Right cardiac atrium (tissue), 5 donors: ENCODE measurements at regions of chr17 and their contacts with region 1.

Region 1: DNA sequence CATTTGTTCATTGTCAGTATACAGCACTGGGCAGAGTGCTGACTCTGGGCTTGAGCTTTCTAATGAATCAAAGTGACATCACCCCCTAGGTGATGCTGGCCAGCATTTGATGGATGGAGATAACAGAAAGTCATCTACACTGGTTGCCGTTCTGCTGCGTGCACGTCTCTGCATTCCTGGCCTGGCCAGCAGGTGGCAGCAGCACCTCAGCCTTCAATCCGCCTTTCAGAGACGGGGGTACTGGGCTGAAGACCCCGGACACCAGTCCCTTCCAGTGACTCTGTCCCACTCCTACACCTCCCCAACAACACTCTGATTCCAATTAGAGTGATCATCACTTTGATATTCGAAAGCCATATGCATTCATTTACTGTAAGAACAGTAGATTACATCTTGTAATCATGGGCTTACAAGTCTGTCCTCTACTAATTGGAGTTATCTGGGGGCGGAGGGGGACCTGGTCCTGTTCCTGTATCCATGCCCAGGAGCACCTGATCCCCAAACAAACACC is 6.0 kb downstream of the CPSF4L start:
- DNase-seq: peak; percentile 40 to 74 (median 72)
- ATAC-seq: peak; percentile 66 to 76
- H3K4me3 ChIP-seq: no peak overlapping the region
- H3K27ac ChIP-seq: no peak overlapping the region
- H3K4me1 ChIP-seq: no peaks in the 10 kb centered on the region
- H3K27me3 ChIP-seq: no peaks in the 10 kb centered on the region

Region 2: GRCh38 chr17:73205459-73205961 is 50.2 kb before region 1 on chr17:
- intact Hi-C with region 1: no loop called
- DNase-seq: no peak
- ATAC-seq: no peak
- H3K4me3 ChIP-seq: no peak overlapping the region
- H3K27ac ChIP-seq: no peak overlapping the region
- H3K4me1 ChIP-seq: peaks cover 14% of the 10 kb centered on the region
- H3K27me3 ChIP-seq: no peaks in the 10 kb centered on the region

Region 3: DNA sequence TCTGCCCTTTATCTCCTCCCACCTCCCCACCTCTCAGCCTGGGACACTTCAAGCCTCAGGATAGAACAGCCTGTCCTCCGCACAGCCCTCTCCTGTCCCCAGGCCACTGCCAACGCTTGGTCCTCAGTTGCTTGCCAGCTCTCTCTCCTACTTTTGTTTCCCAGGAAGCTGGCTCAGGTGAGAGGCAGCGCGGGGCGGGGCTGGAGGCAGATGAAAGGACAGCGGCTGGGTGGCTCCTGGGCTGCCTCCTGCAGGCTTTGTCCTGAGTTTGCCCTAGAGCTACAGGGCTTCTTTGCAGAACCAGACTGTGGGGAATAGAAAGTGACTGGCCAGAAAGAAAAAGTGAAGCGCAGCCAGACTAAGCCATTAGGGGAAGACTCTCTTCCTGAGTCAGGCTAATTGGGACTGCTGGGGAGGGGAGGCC is 104.3 kb after region 1 on chr17:
- intact Hi-C with region 1: no loop called
- DNase-seq: peak in 2 of 3 donors; percentile 53 to 65
- ATAC-seq: peak; percentile 20 to 51
- H3K4me3 ChIP-seq: no peak overlapping the region
- H3K27ac ChIP-seq: no peak overlapping the region
- H3K4me1 ChIP-seq: peaks cover 7% of the 10 kb centered on the region
- H3K27me3 ChIP-seq: no peaks in the 10 kb centered on the region

Region 4: GRCh38 chr17:73371285-73371684 is 115.6 kb after region 1 on chr17:
- intact Hi-C with region 1: loop called (anchors 1 to 2 kb)
- DNase-seq: no peak
- ATAC-seq: no peak
- H3K4me3 ChIP-seq: no peak overlapping the region
- H3K27ac ChIP-seq: no peak overlapping the region
- H3K4me1 ChIP-seq: no peaks in the 10 kb centered on the region
- H3K27me3 ChIP-seq: no peaks in the 10 kb centered on the region